ENCODE measurements at regions of chrX and their contacts with region 1.

Region 1: GRCh38 chrX:129931411-129932015 is 25.5 kb downstream of the UTP14A start:
- DNase-seq: peak; percentile 95
- ATAC-seq: peak; percentile 95
- H3K4me3 ChIP-seq: peak overlapping the region; percentile 11 to 60
- H3K27ac ChIP-seq: peak overlapping the region in 1 of 2 donors; percentile 94
- H3K4me1 ChIP-seq: no peaks in the 10 kb centered on the region
- H3K27me3 ChIP-seq: no peaks in the 10 kb centered on the region

Region 2: DNA sequence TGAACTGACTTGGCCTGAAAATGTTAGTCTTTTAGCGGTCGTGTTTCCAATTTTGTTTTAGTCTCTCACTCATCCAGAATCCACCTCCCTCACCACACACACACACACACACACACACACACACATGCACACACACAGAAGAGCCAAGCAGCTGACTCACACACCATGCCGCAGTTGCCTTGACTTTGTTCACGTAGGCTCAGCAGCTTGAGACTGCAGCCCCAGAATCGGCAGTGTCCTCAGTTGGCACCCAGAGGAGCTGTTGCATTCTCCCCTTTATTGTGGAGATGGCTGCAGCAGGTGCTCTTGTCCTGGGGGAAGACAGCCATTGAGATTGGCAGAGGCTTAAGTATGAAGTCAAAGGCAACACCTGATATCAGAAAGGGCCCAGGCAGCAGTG is 213.6 kb before region 1 on chrX:
- intact Hi-C with region 1: no loop called
- DNase-seq: peak; percentile 59 to 81
- ATAC-seq: peak; percentile 69
- H3K4me3 ChIP-seq: no peak overlapping the region
- H3K27ac ChIP-seq: no peak overlapping the region
- H3K4me1 ChIP-seq: no peaks in the 10 kb centered on the region
- H3K27me3 ChIP-seq: no peaks in the 10 kb centered on the region

Region 3: GRCh38 chrX:129900054-129900453 is 31.5 kb before region 1 on chrX:
- intact Hi-C with region 1: no loop called
- DNase-seq: no peak
- ATAC-seq: no peak
- H3K4me3 ChIP-seq: no peak overlapping the region
- H3K27ac ChIP-seq: no peak overlapping the region
- H3K4me1 ChIP-seq: no peaks in the 10 kb centered on the region
- H3K27me3 ChIP-seq: no peaks in the 10 kb centered on the region

Region 4: GRCh38 chrX:129982274-129983251 is 51.0 kb after region 1 on chrX and contains the start of gene BCORL1:
- intact Hi-C with region 1: loop called (anchors 1 to 5 kb)
- DNase-seq: peak; percentile 94 to 95
- ATAC-seq: peak; percentile 93
- H3K4me3 ChIP-seq: peak within 1 kb of the TSS; percentile 24 to 82
- H3K27ac ChIP-seq: peak within 1 kb of the TSS in 1 of 2 donors; percentile 26
- H3K4me1 ChIP-seq: no peaks in the 10 kb centered on the region
- H3K27me3 ChIP-seq: no peaks in the 10 kb centered on the region
- total RNA-seq, gene BCORL1: 22.1 to 26.9 TPM

Measured in aorta (tissue), 5 donors.